Calu3 (cell line): ENCODE measurements at regions of chr12 and their contacts with region 1.

Region 1: DNA sequence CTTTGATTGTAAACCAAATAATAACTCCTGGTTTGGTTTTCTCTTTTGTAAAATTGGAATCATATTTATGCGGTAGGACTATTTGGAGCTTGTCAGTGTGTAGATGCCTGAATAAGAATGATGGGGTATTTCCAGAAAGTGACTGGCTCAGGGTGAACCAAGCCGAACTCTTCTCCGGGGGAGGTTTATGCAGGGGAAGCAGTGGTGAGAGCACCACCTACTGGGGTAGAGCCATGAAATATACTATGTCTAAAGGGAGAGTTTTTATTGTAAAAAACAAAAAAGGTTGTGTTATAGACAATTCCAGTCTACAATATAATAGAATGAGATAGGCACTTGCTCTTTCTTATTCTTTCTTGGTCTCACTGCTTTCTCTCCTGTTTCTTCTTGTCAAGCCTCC is 222.9 kb upstream of the SLC16A7 start:
- DNase-seq: peak; percentile 51
- H3K4me3 Mint-ChIP-seq: no peak overlapping the region
- H3K27ac Mint-ChIP-seq: no peak overlapping the region
- H3K4me1 Mint-ChIP-seq: no peaks in the 10 kb centered on the region
- H3K27me3 Mint-ChIP-seq: no peaks in the 10 kb centered on the region
- CTCF ChIP-seq: no peak

Region 2: DNA sequence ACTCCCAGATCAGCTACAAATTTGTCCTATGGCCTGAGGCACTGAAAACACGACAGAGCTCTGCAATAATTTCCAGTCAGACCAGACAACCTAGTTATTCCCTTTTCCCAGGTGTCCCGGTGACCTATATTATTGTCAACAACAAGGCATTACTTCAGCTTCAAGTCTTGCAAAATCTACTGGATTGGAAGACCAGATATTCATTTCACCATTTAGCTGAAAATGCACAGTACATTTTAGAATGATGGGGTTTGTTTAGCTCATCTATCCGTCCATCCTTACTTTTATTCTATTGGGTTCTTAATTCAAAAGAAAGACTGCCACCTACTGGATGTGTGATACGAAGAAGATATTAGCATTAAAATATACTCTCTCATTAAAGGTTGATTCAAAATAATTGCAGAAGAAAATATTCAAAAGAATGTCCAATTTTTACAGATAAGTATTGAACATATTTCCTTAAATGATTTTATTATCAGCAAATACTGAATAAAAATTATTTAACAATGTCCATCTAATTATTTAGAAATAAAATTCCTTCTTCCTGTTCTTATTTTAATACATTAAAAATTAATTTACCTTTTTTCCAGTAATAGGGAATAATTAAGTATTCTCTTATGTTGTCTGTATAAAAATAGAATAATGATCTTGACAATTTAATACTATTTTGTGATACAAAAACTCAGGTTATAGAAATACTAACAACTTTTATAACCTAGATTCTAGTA is 207.8 kb before region 1 on chr12:
- CTCF ChIA-PET with region 1: no interaction called
- intact Hi-C with region 1: loop called (anchors 5 kb)
- DNase-seq: peak; percentile 30
- H3K4me3 Mint-ChIP-seq: peak overlapping the region; percentile 22
- H3K27ac Mint-ChIP-seq: peak overlapping the region; percentile 54
- H3K4me1 Mint-ChIP-seq: peaks cover 40% of the 10 kb centered on the region
- H3K27me3 Mint-ChIP-seq: no peaks in the 10 kb centered on the region
- CTCF ChIP-seq: peak; percentile 60